Caco-2 (cell line): ENCODE measurements at regions of chr19 and their contacts with region 1.

Region 1: GRCh38 chr19:29714953-29715700 is at the start of gene C19orf12:
- DNase-seq: peak in 1 of 2 experiments; percentile 75
- H3K4me3 ChIP-seq: peak within 1 kb of the TSS; percentile 93
- H3K4me3 Mint-ChIP-seq: peak within 1 kb of the TSS; percentile 94
- H3K27ac Mint-ChIP-seq: peak within 1 kb of the TSS; percentile 92
- H3K4me1 ChIP-seq: peaks cover 13% of the 10 kb centered on the region
- H3K4me1 Mint-ChIP-seq: peaks cover 27% of the 10 kb centered on the region
- H3K27me3 ChIP-seq: no peaks in the 10 kb centered on the region
- H3K27me3 Mint-ChIP-seq: no peaks in the 10 kb centered on the region
- CTCF ChIP-seq: no peak
- total RNA-seq, gene C19orf12: 20.8 and 23.6 TPM in 2 replicates

Region 2: DNA sequence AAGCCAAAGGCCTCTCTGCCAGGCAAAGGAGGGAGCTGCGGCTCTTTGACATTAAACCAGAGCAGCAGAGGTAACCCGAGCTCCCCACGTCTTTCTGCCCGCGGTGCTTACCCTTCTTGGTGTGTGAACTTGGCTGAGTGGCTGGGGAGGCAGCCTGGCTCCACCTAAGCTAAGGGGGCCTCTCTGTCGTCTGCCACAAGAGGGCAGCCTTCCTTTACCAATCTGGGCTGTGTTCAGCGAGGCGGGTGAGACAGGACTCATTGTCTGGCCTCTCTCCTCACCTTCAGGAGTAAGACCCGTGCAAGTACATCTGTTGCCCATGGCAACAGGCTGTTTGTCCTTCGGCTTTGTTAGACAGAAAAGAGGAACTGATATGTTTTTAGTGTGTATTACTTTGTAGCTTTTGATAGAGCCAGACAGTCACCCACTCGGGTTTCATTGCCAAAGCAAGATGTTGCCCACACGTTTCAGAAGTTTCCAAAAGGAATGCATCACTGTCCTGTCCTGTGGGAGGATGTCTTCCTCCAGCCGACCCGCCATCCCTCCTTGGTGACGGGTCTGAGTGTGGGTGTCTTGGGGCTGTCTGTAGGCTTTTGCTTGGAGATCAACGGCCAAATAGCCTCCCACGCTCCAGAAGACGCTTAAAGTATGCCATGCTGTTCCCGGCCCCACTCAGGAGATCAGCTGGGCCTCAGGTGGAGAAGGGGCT is 104.4 kb before region 1 on chr19:
- CTCF ChIA-PET with region 1: interaction called, 28 read pairs
- POLR2A ChIA-PET with region 1: interaction called, 11 read pairs
- intact Hi-C with region 1: loop called (anchors 1 kb)
- DNase-seq: peak; percentile 81 to 83
- H3K4me3 ChIP-seq: no peak overlapping the region
- H3K4me3 Mint-ChIP-seq: no peak overlapping the region
- H3K27ac Mint-ChIP-seq: no peak overlapping the region
- H3K4me1 ChIP-seq: no peaks in the 10 kb centered on the region
- H3K4me1 Mint-ChIP-seq: no peaks in the 10 kb centered on the region
- H3K27me3 ChIP-seq: no peaks in the 10 kb centered on the region
- H3K27me3 Mint-ChIP-seq: no peaks in the 10 kb centered on the region
- CTCF ChIP-seq: peak; percentile 82 to 88

Region 3: DNA sequence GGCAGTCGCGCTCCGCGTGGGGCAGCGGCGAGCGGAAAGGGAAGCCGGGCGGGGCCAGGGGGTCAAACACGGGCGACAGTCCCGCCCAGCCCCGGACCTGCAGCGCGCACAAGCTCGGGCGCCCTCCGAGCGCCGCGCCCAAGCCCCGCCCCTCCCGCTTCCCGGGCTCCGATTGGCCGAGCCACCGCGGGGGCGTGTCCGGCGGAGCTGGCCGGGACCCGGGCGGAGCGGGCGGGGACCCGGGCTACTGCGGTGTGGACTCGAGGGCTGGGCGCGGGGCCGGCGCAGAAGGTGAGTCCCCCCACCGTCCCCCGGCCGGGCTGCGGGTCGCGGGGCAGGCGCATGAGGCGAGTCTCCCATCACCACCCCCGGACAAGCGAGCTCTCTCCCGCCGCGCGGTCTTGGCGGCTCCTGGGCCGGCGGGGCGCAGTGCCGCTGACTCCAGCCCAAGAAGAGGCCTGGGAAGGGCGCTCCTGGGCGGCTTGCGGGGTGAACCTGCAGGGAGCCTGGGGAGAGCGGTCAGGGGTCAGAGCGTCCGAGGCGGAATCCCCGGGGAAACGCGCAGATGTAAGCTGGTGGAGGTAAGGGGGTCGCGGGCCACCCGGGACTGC is 49.8 kb before region 1 on chr19 and contains the start of gene PLEKHF1:
- CTCF ChIA-PET with region 1: interaction called, 8 read pairs
- POLR2A ChIA-PET with region 1: no interaction called
- intact Hi-C with region 1: loop called (anchors 2 kb)
- DNase-seq: peak; percentile 83 to 97
- H3K4me3 ChIP-seq: peak within 1 kb of the TSS; percentile 92
- H3K4me3 Mint-ChIP-seq: peak within 1 kb of the TSS; percentile 92
- H3K27ac Mint-ChIP-seq: no peak within 1 kb of the TSS
- H3K4me1 ChIP-seq: peaks cover 23% of the 10 kb centered on the region
- H3K4me1 Mint-ChIP-seq: peaks cover 15% of the 10 kb centered on the region
- H3K27me3 ChIP-seq: no peaks in the 10 kb centered on the region
- H3K27me3 Mint-ChIP-seq: no peaks in the 10 kb centered on the region
- CTCF ChIP-seq: no peak
- total RNA-seq, gene PLEKHF1: 3.6 and 5.0 TPM in 2 replicates

Region 4: GRCh38 chr19:29694669-29695627 is 20.2 kb before region 1 on chr19:
- CTCF ChIA-PET with region 1: interaction called, 4 read pairs
- POLR2A ChIA-PET with region 1: no interaction called
- intact Hi-C with region 1: loop called (anchors 1 kb)
- DNase-seq: peak; percentile 67 to 74
- H3K4me3 ChIP-seq: no peak overlapping the region
- H3K4me3 Mint-ChIP-seq: no peak overlapping the region
- H3K27ac Mint-ChIP-seq: no peak overlapping the region
- H3K4me1 ChIP-seq: no peaks in the 10 kb centered on the region
- H3K4me1 Mint-ChIP-seq: no peaks in the 10 kb centered on the region
- H3K27me3 ChIP-seq: no peaks in the 10 kb centered on the region
- H3K27me3 Mint-ChIP-seq: no peaks in the 10 kb centered on the region
- CTCF ChIP-seq: peak; percentile 74 to 84

Region 5: DNA sequence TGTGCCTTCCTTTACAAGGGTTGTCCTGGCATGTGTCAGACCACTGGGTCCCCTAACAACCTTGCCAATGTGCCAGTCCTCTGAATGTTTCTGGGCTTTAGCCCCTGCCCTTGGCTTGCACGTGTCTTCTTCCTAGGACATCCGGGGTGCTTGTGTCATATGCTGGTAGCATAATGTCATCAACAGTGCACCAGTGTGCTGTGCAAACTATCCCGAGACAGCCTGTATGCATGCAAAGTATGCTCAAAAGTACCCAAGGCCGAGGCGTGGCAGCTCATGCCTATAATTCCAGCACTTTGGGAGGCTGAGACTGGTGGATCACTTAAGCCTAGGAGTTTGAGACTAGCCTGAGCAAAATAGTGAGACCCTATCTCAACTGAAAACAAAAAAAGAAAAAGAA is 20.7 kb after region 1 on chr19:
- CTCF ChIA-PET with region 1: interaction called, 11 read pairs
- POLR2A ChIA-PET with region 1: no interaction called
- intact Hi-C with region 1: no loop called
- DNase-seq: no peak
- H3K4me3 ChIP-seq: no peak overlapping the region
- H3K4me3 Mint-ChIP-seq: no peak overlapping the region
- H3K27ac Mint-ChIP-seq: no peak overlapping the region
- H3K4me1 ChIP-seq: no peaks in the 10 kb centered on the region
- H3K4me1 Mint-ChIP-seq: no peaks in the 10 kb centered on the region
- H3K27me3 ChIP-seq: no peaks in the 10 kb centered on the region; the same call in 1 of the 2 replicates
- H3K27me3 Mint-ChIP-seq: peaks cover 16% of the 10 kb centered on the region
- CTCF ChIP-seq: no peak